ENCODE measurements at regions of chr12 and their contacts with region 1.

Region 1: DNA sequence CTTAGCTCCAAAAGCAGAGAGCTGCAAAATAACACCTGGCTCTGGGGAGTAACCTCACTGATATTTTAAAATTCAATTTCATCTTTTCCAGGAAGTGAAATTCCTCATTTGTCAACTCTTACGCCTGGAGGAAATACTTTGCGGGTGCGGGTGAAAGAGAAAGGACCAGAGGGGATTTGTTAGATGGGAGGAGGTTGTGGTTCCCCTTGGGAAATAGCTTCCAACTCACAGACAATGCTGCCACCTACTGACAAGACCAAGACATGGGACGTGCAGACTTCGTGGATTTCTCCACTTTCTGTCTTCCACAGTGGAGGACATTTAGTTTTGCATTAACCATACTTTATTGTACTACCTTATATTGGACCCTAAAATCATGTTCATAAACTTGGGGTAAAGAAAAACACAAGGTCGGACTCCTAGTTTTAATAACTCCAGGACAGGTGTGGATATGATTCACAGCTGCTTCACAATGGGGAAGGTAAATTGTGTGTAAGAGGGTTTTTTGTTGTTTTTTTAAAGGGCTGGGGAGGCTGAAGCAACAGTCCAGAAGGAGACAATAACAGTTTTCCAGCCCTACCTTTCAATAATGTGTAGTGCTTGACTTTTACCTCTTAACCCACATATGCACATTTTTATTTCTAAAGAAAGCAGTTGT is 10.8 kb downstream of the FBXL14 start:
- DNase-seq: peak in 1 of 3 donors; percentile 66
- ATAC-seq: peak; percentile 88 to 97 (median 94)
- H3K4me3 ChIP-seq: no peak overlapping the region
- H3K27ac ChIP-seq: no peak overlapping the region
- H3K4me1 ChIP-seq: peaks cover 0 to 6% (median 0%) of the 10 kb centered on the region in 4 donors
- H3K27me3 ChIP-seq: no peaks in the 10 kb centered on the region
- CTCF ChIP-seq: peak; percentile 87 to 94 (median 89)
- POLR2A ChIP-seq: no peak

Region 2: DNA sequence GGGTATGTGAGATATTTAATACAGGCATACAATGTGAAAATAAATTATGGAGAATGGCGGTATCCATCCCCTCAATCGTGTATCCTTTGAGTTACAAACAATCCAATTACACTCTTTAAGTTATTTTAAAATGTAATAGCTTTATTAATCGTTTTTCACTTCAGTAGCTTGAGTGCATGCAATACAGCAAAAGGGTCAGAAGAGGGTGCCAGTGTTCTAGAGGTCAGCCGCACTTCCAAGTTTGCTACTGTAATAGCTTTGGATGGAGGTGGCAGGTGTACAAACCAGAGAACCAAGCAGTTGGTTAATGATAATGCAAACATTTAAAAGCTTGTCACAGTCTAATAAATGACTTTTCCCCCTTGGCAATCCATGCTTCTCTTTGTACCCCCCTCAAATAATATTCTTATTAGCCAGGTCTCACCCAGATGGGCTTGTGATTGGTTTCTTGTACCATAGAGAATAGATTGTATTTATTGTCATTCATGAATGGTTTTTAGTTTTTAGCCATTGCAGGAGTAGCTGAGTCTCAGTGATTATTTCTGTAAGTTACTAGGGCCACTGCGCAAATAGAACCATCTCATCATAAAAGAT is 465.5 kb before region 1 on chr12:
- intact Hi-C with region 1: loop called in 1 of 2 experiments (anchors 10 kb)
- DNase-seq: peak in 2 of 3 donors; percentile 44 to 69
- ATAC-seq: peak; percentile 90 to 96 (median 94)
- H3K4me3 ChIP-seq: no peak overlapping the region
- H3K27ac ChIP-seq: no peak overlapping the region
- H3K4me1 ChIP-seq: no peaks in the 10 kb centered on the region
- H3K27me3 ChIP-seq: no peaks in the 10 kb centered on the region
- CTCF ChIP-seq: peak; percentile 93 to 96 (median 94)
- POLR2A ChIP-seq: no peak

Region 3: GRCh38 chr12:1185460-1186182 is 397.9 kb before region 1 on chr12:
- intact Hi-C with region 1: no loop called
- DNase-seq: no peak
- ATAC-seq: no peak
- H3K4me3 ChIP-seq: no peak overlapping the region
- H3K27ac ChIP-seq: no peak overlapping the region
- H3K4me1 ChIP-seq: peaks cover 0 to 5% (median 2%) of the 10 kb centered on the region in 4 donors
- H3K27me3 ChIP-seq: no peaks in the 10 kb centered on the region
- CTCF ChIP-seq: no peak
- POLR2A ChIP-seq: no peak

Measured in right lobe of liver (tissue), 6 donors.